ENCODE measurements at regions of chr9 and their contacts with region 1.

Region 1: DNA sequence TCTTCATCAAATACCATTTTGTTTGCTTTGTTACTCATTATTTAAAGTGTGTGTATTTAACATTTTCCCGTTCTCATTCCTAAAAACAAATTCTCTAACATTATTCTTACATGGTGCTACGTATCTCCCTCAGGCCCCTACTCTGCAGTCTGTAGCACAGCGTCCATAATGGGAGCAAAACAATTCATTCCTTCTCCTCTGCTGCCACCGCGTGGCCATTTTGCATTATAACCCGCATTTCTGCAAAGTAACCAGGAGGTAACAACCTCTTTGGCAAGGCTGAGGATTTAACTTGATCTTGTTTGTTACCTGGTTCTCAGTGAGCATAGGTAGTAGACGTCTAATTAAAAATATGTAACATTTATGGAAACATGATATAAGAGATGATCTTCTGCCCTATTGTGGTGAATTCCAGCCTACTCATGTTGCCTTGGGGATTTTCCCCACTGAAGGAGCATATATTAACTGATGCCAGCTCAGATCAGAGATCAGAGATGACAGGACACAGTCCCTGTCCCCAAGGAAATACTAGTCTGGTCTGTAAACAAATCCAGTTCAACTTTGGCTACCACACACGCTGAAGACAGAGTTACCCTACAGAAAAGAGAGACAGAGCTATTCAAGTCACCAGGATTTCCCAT is 10.5 kb downstream of the OR1K1 start:
- DNase-seq: peak; percentile 63 to 88 (median 76)
- H3K4me3 ChIP-seq: peak overlapping the region in 1 of 59 donors; percentile 21
- H3K27ac ChIP-seq: peak overlapping the region in 1 of 59 donors; percentile 31
- H3K27me3 ChIP-seq: no peaks in the 10 kb centered on the region
- CTCF ChIP-seq: peak; percentile 76 to 97 (median 88)

Region 2: GRCh38 chr9:122360891-122361290 is 449.5 kb before region 1 on chr9:
- intact Hi-C with region 1: loop called (anchors 10 kb)
- DNase-seq: peak in 1 of 10 donors; percentile 17
- H3K4me3 ChIP-seq: no peak overlapping the region
- H3K27ac ChIP-seq: no peak overlapping the region
- H3K27me3 ChIP-seq: no peaks in the 10 kb centered on the region
- CTCF ChIP-seq: no peak

Region 3: GRCh38 chr9:122464633-122465567 is 345.5 kb before region 1 on chr9:
- intact Hi-C with region 1: loop called (anchors 2 kb)
- DNase-seq: peak; percentile 36 to 83 (median 69)
- H3K4me3 ChIP-seq: peak overlapping the region in 56 of 59 donors; percentile 18 to 67 (median 47)
- H3K27ac ChIP-seq: peak overlapping the region in 3 of 59 donors; percentile 3 to 64 (median 18)
- H3K27me3 ChIP-seq: no peaks in the 10 kb centered on the region
- CTCF ChIP-seq: peak; percentile 72 to 96 (median 89)

Region 4: DNA sequence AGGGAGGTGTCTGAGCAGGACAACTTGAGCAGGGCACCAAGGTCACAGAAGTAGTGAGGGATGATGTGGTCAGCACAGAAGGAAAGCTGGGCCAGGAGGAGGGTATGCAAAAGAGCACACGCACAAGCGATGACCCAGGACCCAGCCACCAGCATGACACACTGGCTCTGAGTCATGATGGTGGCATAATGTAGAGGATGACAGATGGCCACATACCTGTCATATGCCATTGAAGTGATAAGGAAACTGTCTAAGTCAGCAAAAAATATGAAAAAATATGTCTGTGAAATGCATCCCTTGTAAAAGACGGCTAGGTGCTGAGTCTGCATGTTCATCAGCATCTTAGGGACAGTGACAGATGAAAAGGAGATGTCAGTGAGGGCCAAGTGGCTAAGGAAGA is 333.1 kb before region 1 on chr9:
- intact Hi-C with region 1: loop called in 1 of 2 experiments (anchors 5 kb)
- DNase-seq: no peak
- H3K4me3 ChIP-seq: no peak overlapping the region
- H3K27ac ChIP-seq: peak overlapping the region in 1 of 59 donors; percentile 48
- H3K27me3 ChIP-seq: peaks cover 0 to 5% (median 0%) of the 10 kb centered on the region in 45 donors
- CTCF ChIP-seq: no peak

Region 5: DNA sequence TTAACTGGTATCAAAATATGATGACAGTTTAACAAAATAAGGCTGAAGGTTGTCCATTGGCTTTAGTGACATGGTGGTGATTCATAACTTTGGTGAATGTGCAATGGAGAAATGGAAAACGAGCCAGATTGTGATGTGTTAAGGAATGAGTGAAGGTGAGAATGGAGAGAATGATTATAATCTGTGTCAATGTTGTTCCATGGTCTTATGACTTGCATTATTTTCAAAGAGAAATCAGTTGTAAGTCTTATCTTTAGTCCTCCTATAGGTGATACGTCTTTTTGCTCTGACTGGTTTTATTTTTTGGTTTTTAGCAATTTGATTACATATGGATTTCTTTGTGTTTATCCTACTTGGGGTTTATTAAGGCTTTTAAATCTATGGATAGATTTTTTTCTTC is 55.6 kb before region 1 on chr9:
- intact Hi-C with region 1: no loop called
- DNase-seq: no peak
- H3K4me3 ChIP-seq: no peak overlapping the region
- H3K27ac ChIP-seq: no peak overlapping the region
- H3K27me3 ChIP-seq: no peaks in the 10 kb centered on the region
- CTCF ChIP-seq: no peak

Region 6: DNA sequence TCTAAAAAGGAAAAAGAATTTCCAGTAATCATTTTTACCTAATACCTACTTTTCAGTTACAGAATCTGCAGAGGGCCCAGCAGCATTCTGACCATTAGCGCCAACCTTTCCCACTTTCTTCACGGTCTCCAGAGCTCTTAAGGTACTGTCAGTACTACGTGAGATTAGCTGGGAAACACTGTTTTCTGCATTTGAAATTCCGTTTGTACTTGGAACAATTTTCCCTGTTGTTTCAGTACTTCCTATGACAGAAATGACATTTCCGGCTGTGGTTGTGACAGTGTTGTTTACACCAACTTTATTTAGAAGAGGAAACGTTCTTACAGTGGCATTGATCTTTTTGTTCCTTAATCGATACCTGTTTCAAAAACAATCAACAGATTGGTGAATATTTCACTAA is 54.9 kb after region 1 on chr9:
- intact Hi-C with region 1: no loop called
- DNase-seq: no peak
- H3K4me3 ChIP-seq: no peak overlapping the region
- H3K27ac ChIP-seq: peak overlapping the region in 11 of 59 donors; percentile 5 to 51 (median 19)
- H3K27me3 ChIP-seq: no peaks in the 10 kb centered on the region
- CTCF ChIP-seq: no peak

Region 7: GRCh38 chr9:122875523-122875922 is 65.1 kb after region 1 on chr9:
- intact Hi-C with region 1: no loop called
- DNase-seq: no peak
- H3K4me3 ChIP-seq: no peak overlapping the region
- H3K27ac ChIP-seq: no peak overlapping the region
- H3K27me3 ChIP-seq: no peaks in the 10 kb centered on the region
- CTCF ChIP-seq: no peak

Measured in dorsolateral prefrontal cortex (tissue), 120 donors.